ENCODE measurements at regions of chr6 and their contacts with region 1.

Region 1: DNA sequence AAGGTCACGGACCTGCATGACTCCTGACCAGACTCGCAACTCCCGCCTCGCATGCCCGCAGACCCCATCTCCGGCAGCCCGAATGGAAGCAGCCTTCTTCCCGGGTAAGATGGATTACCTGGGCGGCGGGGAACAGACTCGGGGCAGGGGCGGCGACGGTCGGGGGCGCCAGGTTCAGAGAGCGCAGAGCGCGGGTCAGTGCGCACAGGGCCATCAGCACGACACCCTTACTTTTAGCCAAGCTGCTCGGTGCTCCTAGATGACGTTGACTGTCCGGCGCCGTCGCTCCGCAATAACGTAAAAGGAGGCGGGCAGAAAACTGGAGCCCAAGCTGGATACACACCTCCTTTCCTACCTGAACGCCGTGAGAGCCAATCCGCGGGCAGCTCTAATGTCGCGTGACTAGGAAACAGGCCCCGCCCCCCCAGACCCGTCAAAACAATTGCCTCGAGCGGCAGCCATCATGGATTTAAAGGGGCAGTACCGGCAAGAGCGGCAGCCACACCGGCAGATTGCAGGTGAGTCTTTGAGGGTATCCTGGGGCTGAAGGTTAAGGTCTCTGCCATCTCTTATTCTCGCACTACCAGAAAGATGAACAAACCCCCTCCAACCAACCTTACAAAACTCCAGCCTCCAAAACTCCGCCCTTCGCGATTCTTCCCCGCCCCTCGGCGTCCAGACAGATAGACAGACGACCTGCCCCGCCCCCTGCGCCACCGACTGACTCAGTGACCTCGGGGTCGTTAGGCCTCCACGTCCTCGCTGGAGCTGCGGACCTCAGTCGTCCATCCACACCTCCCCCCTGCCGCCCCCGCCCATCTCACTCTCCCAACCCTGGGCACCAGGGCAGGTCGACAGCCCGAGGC is at the starts of genes KLC4 and MRPL2:
- DNase-seq: peak; percentile 94 to 99 (median 97)
- ATAC-seq: peak; percentile 97
- H3K4me3 ChIP-seq: peak within 1 kb of the TSS; percentile 89
- H3K4me3 Mint-ChIP-seq: peak within 1 kb of the TSS; percentile 91
- H3K27ac ChIP-seq: peak within 1 kb of the TSS; percentile 85 to 95
- H3K27ac Mint-ChIP-seq: peak within 1 kb of the TSS; percentile 96
- H3K4me1 ChIP-seq: peaks cover 29% of the 10 kb centered on the region
- H3K4me1 Mint-ChIP-seq: peaks cover 50% of the 10 kb centered on the region
- H3K27me3 ChIP-seq: no peaks in the 10 kb centered on the region
- H3K27me3 Mint-ChIP-seq: no peaks in the 10 kb centered on the region
- CTCF ChIP-seq: no peak
- total RNA-seq, gene KLC4: 39.6 to 40.8 TPM
- total RNA-seq, gene MRPL2: 42.8 to 48.0 TPM

Region 2: GRCh38 chr6:41895300-41896233 is 1163.8 kb before region 1 on chr6 and contains the start of gene USP49:
- CTCF ChIA-PET with region 1: no interaction called
- POLR2A ChIA-PET with region 1: no interaction called
- intact Hi-C with region 1: loop called in 1 of 2 experiments (anchors 10 kb)
- DNase-seq: peak; percentile 79 to 96 (median 88)
- ATAC-seq: peak; percentile 93
- H3K4me3 ChIP-seq: peak within 1 kb of the TSS; percentile 84
- H3K4me3 Mint-ChIP-seq: no peak within 1 kb of the TSS
- H3K27ac ChIP-seq: peak within 1 kb of the TSS; percentile 77 to 80
- H3K27ac Mint-ChIP-seq: no peak within 1 kb of the TSS
- H3K4me1 ChIP-seq: peaks cover 21% of the 10 kb centered on the region
- H3K4me1 Mint-ChIP-seq: peaks cover 12% of the 10 kb centered on the region
- H3K27me3 ChIP-seq: no peaks in the 10 kb centered on the region
- H3K27me3 Mint-ChIP-seq: no peaks in the 10 kb centered on the region
- CTCF ChIP-seq: no peak
- total RNA-seq, gene USP49: 1.3 TPM

Region 3: GRCh38 chr6:42978839-42979522 is 80.4 kb before region 1 on chr6 and contains the start of gene PEX6:
- CTCF ChIA-PET with region 1: no interaction called
- POLR2A ChIA-PET with region 1: interaction called, 19 read pairs
- intact Hi-C with region 1: loop called (anchors 1 to 5 kb)
- DNase-seq: peak; percentile 81 to 98 (median 93)
- ATAC-seq: peak; percentile 94
- H3K4me3 ChIP-seq: peak within 1 kb of the TSS; percentile 85
- H3K4me3 Mint-ChIP-seq: peak within 1 kb of the TSS; percentile 95
- H3K27ac ChIP-seq: peak within 1 kb of the TSS; percentile 83 to 85
- H3K27ac Mint-ChIP-seq: peak within 1 kb of the TSS; percentile 97
- H3K4me1 ChIP-seq: peaks cover 50% of the 10 kb centered on the region
- H3K4me1 Mint-ChIP-seq: peaks cover 47% of the 10 kb centered on the region
- H3K27me3 ChIP-seq: no peaks in the 10 kb centered on the region
- H3K27me3 Mint-ChIP-seq: no peaks in the 10 kb centered on the region
- CTCF ChIP-seq: no peak
- total RNA-seq, gene PEX6: 12.8 to 13.6 TPM

Region 4: GRCh38 chr6:42984001-42984923 is 75.1 kb before region 1 on chr6 and contains the start of gene PPP2R5D:
- CTCF ChIA-PET with region 1: no interaction called
- POLR2A ChIA-PET with region 1: interaction called, 19 read pairs
- intact Hi-C with region 1: loop called (anchors 1 to 5 kb)
- DNase-seq: peak; percentile 93 to 99 (median 96)
- ATAC-seq: peak; percentile 90
- H3K4me3 ChIP-seq: peak within 1 kb of the TSS; percentile 81
- H3K4me3 Mint-ChIP-seq: peak within 1 kb of the TSS; percentile 93
- H3K27ac ChIP-seq: peak within 1 kb of the TSS; percentile 73 to 77
- H3K27ac Mint-ChIP-seq: peak within 1 kb of the TSS; percentile 96
- H3K4me1 ChIP-seq: peaks cover 56% of the 10 kb centered on the region
- H3K4me1 Mint-ChIP-seq: peaks cover 67% of the 10 kb centered on the region
- H3K27me3 ChIP-seq: no peaks in the 10 kb centered on the region
- H3K27me3 Mint-ChIP-seq: no peaks in the 10 kb centered on the region
- CTCF ChIP-seq: no peak
- total RNA-seq, gene PPP2R5D: 15.3 to 17.5 TPM

Region 5: DNA sequence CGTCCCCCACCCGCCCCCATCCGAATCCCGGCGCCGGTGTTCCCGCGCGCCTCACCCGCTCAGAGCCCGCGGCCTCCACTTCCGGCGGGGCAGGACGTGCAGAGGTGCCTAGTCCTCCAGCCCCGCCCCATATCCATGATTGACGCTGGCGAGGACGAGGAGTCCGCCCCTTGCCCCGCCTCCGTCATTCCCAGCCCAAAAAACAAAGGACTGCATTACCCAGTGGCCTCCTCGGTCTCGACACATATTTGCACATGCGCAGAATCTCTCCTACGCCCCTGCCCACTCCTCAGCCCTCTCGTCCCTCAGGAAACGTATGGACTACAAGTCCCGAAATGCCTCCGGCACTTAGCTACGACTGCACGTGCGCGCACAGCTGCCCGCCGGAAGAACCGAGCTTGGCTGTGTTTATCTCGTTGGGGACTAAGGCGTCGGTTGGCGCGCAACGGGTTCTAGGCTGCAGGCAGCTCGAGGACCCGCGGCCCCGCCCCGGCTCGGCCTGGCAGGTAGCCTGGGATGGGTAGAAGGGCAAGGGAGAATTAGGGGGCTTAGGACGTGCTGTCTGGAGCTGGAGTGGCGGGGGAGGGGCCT is 45.5 kb before region 1 on chr6 and contains the starts of genes KLHDC3 and MEA1:
- CTCF ChIA-PET with region 1: interaction called, 3 read pairs
- POLR2A ChIA-PET with region 1: interaction called, 37 read pairs
- intact Hi-C with region 1: loop called (anchors 1 kb)
- DNase-seq: peak; percentile 95 to 100 (median 98)
- ATAC-seq: peak; percentile 91
- H3K4me3 ChIP-seq: peak within 1 kb of the TSS; percentile 86
- H3K4me3 Mint-ChIP-seq: peak within 1 kb of the TSS; percentile 88
- H3K27ac ChIP-seq: peak within 1 kb of the TSS; percentile 51 to 59
- H3K27ac Mint-ChIP-seq: peak within 1 kb of the TSS; percentile 81
- H3K4me1 ChIP-seq: peaks cover 55% of the 10 kb centered on the region
- H3K4me1 Mint-ChIP-seq: peaks cover 59% of the 10 kb centered on the region
- H3K27me3 ChIP-seq: no peaks in the 10 kb centered on the region
- H3K27me3 Mint-ChIP-seq: no peaks in the 10 kb centered on the region
- CTCF ChIP-seq: no peak
- total RNA-seq, gene KLHDC3: 21.0 to 22.3 TPM
- total RNA-seq, gene MEA1: 13.6 to 17.0 TPM

Region 6: DNA sequence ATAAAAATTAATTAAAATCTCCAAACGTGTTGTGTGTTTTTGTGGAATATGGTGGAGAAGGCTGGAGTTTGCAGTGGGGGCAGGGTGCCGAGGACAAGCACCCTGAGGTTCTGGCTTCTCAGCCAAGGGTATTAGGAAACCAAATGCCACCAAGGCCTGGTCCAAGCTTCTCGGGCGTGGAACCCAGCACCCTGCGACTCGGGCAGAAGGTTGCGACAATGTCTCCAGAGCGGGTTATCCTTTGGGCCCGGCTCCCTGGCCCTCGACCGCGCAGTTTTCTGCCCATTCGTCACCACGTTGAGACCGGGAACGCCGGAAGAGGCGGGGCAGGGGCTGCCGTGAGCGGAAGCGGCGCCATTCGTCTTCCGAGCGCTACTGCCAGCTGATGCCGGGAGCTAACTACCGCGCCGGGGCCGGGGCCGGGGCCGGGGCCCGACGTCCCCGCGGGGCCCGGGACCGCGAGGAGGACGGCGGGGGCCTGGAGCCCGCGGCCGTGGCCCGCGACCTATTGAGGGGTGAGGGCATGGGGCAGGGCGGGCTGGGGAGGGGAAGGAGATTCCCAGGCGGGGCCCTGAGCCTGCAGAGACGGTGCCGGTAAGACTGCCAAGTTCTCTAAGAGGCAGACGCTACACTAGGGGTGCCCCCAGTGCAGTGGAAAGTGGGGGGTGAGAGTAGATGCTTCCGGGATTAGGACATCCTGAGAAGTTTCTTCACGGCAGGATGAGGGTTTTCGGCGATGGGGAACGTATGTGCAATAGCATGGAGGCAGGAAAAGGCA is 37.9 kb before region 1 on chr6 and contains the start of gene RRP36:
- CTCF ChIA-PET with region 1: no interaction called
- POLR2A ChIA-PET with region 1: interaction called, 37 read pairs
- intact Hi-C with region 1: no loop called
- DNase-seq: peak; percentile 33 to 80 (median 63)
- ATAC-seq: peak; percentile 73
- H3K4me3 ChIP-seq: peak within 1 kb of the TSS; percentile 84
- H3K4me3 Mint-ChIP-seq: peak within 1 kb of the TSS; percentile 98
- H3K27ac ChIP-seq: peak within 1 kb of the TSS; percentile 57 to 62
- H3K27ac Mint-ChIP-seq: peak within 1 kb of the TSS; percentile 83
- H3K4me1 ChIP-seq: peaks cover 52% of the 10 kb centered on the region
- H3K4me1 Mint-ChIP-seq: peaks cover 38% of the 10 kb centered on the region
- H3K27me3 ChIP-seq: no peaks in the 10 kb centered on the region
- H3K27me3 Mint-ChIP-seq: no peaks in the 10 kb centered on the region
- CTCF ChIP-seq: no peak
- total RNA-seq, gene RRP36: 17.2 to 17.7 TPM

Region 7: DNA sequence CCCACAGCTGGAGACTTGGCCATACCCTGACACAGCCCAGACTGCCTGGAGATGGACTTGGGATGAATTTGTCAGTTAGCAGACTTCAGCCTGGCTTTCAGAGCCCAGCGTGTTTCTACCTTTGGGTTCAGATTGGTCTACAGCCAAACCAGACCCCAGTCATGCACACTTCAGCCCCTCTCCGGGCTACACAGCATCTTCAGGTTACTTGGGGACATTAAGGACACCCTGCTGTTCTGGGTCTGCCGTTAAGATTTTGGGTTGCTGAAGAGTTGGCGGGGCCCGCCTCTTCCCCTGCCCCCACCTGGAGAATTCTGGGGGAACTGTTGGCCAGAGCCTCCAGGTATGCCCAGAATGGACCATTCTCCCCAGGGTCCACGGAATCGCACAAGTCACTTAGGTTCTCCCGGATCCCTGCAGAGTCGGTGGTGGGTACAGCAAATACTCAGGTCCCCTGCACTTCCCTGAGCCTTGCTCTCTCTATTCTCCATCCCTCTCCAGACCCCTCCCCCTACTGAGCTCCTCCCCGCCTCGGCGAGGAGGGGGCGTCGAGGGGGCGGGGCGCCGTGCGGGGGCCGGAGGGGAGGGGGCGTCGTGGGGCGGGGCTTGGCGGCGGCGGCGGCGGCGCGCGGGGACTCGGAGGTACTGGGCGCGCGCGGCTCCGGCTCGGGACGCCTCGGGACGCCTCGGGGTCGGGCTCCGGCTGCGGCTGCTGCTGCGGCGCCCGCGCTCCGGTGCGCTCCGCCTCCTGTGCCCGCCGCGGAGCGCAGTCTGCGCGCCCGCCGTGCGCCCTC is 16.5 kb after region 1 on chr6 and contains the start of gene PTK7:
- CTCF ChIA-PET with region 1: no interaction called
- POLR2A ChIA-PET with region 1: interaction called, 10 read pairs
- intact Hi-C with region 1: no loop called
- DNase-seq: peak in 4 of 14 experiments; percentile 18 to 59 (median 51)
- ATAC-seq: peak; percentile 78
- H3K4me3 ChIP-seq: peak within 1 kb of the TSS; percentile 46
- H3K4me3 Mint-ChIP-seq: peak within 1 kb of the TSS; percentile 42
- H3K27ac ChIP-seq: no peak within 1 kb of the TSS
- H3K27ac Mint-ChIP-seq: no peak within 1 kb of the TSS
- H3K4me1 ChIP-seq: peaks cover 18% of the 10 kb centered on the region
- H3K4me1 Mint-ChIP-seq: peaks cover 8% of the 10 kb centered on the region
- H3K27me3 ChIP-seq: peaks cover 23 to 24% of the 10 kb centered on the region in 2 experiments
- H3K27me3 Mint-ChIP-seq: peaks cover 10% of the 10 kb centered on the region
- CTCF ChIP-seq: no peak
- total RNA-seq, gene PTK7: 1.2 to 1.6 TPM

Region 8: GRCh38 chr6:43318011-43318410 is 258.6 kb after region 1 on chr6:
- CTCF ChIA-PET with region 1: no interaction called
- POLR2A ChIA-PET with region 1: no interaction called
- intact Hi-C with region 1: no loop called
- DNase-seq: no peak
- ATAC-seq: no peak
- H3K4me3 ChIP-seq: no peak overlapping the region
- H3K4me3 Mint-ChIP-seq: no peak overlapping the region
- H3K27ac ChIP-seq: no peak overlapping the region
- H3K27ac Mint-ChIP-seq: no peak overlapping the region
- H3K4me1 ChIP-seq: no peaks in the 10 kb centered on the region
- H3K4me1 Mint-ChIP-seq: no peaks in the 10 kb centered on the region
- H3K27me3 ChIP-seq: no peaks in the 10 kb centered on the region
- H3K27me3 Mint-ChIP-seq: no peaks in the 10 kb centered on the region
- CTCF ChIP-seq: no peak

Region 9: DNA sequence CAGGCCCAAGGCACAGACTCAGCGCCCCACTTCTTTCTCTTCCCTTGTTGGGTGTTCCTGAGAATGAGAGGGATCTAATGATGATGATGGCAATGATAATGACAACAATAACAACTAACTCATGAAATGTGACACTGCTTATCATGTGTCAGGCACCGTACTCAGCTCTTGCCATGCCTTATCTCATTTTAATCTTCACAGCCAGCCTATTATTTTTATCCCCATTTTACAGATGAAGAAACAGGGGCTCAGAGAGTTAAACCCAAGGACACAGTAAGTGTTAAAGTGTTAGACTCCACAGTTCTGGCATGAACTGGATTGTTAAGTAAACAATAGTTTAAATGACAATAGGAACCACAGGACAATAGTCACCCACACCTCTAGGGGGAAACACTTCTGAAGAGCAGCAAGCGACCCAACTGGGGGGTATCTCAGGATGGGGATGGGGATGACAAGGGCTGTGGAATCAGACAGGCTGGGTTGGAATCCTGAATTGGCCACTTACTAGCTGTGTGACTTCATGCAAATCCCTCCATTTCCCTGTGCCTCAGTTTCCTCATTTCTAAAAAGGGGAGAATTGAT is 597.9 kb after region 1 on chr6:
- CTCF ChIA-PET with region 1: no interaction called
- POLR2A ChIA-PET with region 1: no interaction called
- intact Hi-C with region 1: no loop called
- DNase-seq: no peak
- ATAC-seq: no peak
- H3K4me3 ChIP-seq: no peak overlapping the region
- H3K4me3 Mint-ChIP-seq: no peak overlapping the region
- H3K27ac ChIP-seq: no peak overlapping the region
- H3K27ac Mint-ChIP-seq: no peak overlapping the region
- H3K4me1 ChIP-seq: no peaks in the 10 kb centered on the region
- H3K4me1 Mint-ChIP-seq: no peaks in the 10 kb centered on the region
- H3K27me3 ChIP-seq: no peaks in the 10 kb centered on the region
- H3K27me3 Mint-ChIP-seq: no peaks in the 10 kb centered on the region
- CTCF ChIP-seq: no peak